Endothelial cell of umbilical vein (primary cell): ENCODE measurements at regions of chr17 and their contacts with region 1.

Region 1: DNA sequence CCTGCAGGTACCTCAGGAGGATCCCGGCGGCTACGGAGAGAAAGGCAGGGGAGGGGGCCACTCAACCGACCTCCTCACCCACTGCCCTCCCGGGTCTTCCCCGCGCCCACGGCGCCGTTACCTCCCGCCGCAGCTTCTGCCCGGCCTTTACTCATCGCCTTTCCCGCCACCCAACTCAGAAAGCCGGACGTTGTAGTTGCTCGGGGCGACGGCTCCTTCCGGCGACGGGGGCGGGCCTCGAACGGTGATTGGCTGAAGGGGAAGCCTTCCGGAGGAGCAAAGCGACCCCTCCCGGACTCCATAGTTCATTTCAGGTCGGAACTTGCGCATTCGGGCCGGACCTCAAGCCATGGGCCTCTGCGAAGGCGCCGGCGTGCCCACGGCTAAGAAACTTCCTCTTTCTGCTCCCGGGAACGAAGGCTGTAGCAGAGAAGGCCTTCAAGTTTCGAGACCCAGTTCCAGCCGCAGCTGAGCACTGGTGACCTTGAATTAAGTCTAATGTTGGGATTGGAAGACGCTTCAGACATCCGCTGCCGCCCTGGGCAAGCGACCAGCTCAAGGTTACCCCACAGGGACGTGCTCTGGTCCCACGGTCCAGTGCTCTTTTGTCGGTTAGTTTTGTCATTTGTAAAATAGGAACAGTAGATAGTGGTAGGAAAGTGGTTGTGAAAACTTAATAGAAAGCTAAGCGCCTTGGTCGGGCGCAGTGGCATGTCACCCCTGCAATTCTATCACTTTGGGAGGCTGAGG is at the start of gene PSMC3IP:
- DNase-seq: peak; percentile 96
- H3K4me3 ChIP-seq: peak within 1 kb of the TSS; percentile 53 to 80 (median 76)
- H3K27ac ChIP-seq: peak within 1 kb of the TSS; percentile 50
- H3K4me1 ChIP-seq: peaks cover 18% of the 10 kb centered on the region
- H3K27me3 ChIP-seq: no peaks in the 10 kb centered on the region
- CTCF ChIP-seq: peak; percentile 55 to 64
- POLR2A ChIP-seq: peak; percentile 69
- total RNA-seq, gene PSMC3IP: 19.3 and 20.8 TPM in 2 replicates

Region 2: GRCh38 chr17:42183741-42184711 is 393.7 kb before region 1 on chr17:
- CTCF ChIA-PET with region 1: no interaction called
- POLR2A ChIA-PET with region 1: interaction called, 10 read pairs
- dilution Hi-C with region 1: no loop called
- intact Hi-C with region 1: no loop called
- DNase-seq: peak; percentile 70
- H3K4me3 ChIP-seq: peak overlapping the region; percentile 35 to 51 (median 45)
- H3K27ac ChIP-seq: peak overlapping the region; percentile 16
- H3K4me1 ChIP-seq: peaks cover 14% of the 10 kb centered on the region
- H3K27me3 ChIP-seq: peaks cover 9 to 13% of the 10 kb centered on the region in 2 experiments
- CTCF ChIP-seq: peak; percentile 86 to 99
- POLR2A ChIP-seq: peak; percentile 38

Region 3: DNA sequence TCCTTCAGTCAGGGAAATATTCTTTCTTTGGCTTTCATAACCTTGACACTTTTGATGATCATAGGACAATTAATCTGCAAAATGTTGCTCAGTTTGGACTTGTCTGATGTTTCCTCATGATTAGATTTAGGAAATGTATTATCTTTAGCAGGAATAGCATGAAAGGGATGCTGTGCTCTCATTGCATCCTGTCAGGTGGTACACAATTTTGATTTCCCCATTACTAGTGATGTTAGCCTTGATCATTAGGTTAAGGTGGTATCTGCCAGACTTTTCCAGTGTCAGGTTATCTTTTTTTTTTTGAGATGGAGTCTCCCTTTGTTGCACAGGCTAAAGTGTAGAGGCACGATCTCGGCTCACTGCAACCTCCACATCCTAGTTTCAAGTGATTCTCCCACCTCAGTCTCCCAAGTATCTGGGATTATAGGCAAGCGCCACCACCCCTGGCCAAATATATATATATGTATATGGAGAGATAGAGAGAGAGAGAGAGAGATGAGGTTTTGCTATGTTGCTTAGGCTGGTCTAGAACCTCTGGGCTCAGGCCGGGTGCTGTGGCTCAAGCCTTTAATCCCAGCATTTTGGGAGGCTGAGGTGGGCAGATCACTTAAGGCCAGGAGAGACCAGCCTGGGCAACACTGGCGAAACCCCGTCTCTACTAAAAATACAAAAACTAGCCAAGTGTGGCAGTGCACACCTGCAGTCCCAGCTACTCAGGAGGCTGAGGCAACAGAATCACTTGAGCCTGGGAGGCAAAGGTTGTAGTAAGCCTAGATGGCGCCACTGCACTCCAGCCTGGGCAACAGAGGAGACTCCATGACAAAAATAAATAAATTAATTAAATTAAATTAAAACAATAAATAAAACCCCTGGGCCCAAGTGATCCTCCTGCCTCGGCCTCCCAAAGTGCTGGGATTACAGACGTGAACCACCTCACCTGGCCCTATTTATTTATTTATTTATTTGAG is 138.8 kb before region 1 on chr17:
- CTCF ChIA-PET with region 1: no interaction called
- POLR2A ChIA-PET with region 1: no interaction called
- dilution Hi-C with region 1: no loop called
- intact Hi-C with region 1: no loop called
- DNase-seq: peak; percentile 40
- H3K4me3 ChIP-seq: no peak overlapping the region
- H3K27ac ChIP-seq: no peak overlapping the region
- H3K4me1 ChIP-seq: peaks cover 8% of the 10 kb centered on the region
- H3K27me3 ChIP-seq: no peaks in the 10 kb centered on the region
- CTCF ChIP-seq: peak; percentile 26 to 58
- POLR2A ChIP-seq: no peak

Region 4: DNA sequence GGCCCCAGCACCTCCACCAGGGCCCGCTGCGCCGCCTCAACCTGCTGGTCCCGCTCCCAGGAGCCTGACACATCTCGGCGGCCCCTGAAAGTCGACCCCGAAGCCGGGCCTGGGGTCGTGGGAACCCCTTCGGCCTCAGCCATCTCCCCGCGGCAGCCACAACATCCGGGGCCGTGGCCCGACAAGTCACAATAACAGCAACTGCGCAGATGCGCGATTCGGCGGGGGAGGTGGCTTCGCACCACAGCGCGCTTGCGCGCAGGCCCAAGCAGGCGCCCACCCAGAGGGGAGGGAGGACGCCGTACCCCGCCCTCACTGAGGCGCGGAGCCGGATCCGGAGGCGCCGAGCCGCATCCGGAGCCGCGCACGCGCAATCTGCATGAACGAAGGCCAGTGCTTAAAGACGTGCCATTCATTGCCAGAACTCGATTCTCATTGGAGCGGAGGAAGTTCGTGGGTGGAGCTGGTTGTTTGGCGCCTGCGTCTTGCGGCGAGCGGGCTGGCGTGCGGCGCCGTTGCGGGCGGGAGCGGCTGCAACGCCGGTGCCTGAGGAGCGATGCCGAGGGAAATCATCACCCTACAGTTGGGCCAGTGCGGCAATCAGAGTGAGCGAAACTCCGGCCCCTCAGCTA is 31.6 kb after region 1 on chr17 and contains the starts of genes RETREG3 and TUBG1:
- CTCF ChIA-PET with region 1: interaction called, 39 read pairs
- POLR2A ChIA-PET with region 1: no interaction called
- dilution Hi-C with region 1: no loop called
- intact Hi-C with region 1: loop called (anchors 2 kb)
- DNase-seq: peak; percentile 99
- H3K4me3 ChIP-seq: peak within 1 kb of the TSS; percentile 73 to 81 (median 79)
- H3K27ac ChIP-seq: peak within 1 kb of the TSS; percentile 69
- H3K4me1 ChIP-seq: peaks cover 11% of the 10 kb centered on the region
- H3K27me3 ChIP-seq: no peaks in the 10 kb centered on the region
- CTCF ChIP-seq: peak; percentile 39 to 72
- POLR2A ChIP-seq: peak; percentile 89
- total RNA-seq, gene RETREG3: 52.3 and 53.4 TPM in 2 replicates
- total RNA-seq, gene TUBG1: 96.9 and 102 TPM in 2 replicates

Region 5: GRCh38 chr17:42698736-42699414 is 121.2 kb after region 1 on chr17:
- CTCF ChIA-PET with region 1: interaction called, 19 read pairs
- POLR2A ChIA-PET with region 1: no interaction called
- dilution Hi-C with region 1: no loop called
- intact Hi-C with region 1: no loop called
- DNase-seq: no peak
- H3K4me3 ChIP-seq: no peak overlapping the region
- H3K27ac ChIP-seq: no peak overlapping the region
- H3K4me1 ChIP-seq: no peaks in the 10 kb centered on the region
- H3K27me3 ChIP-seq: no peaks in the 10 kb centered on the region
- CTCF ChIP-seq: no peak
- POLR2A ChIP-seq: no peak

Region 6: DNA sequence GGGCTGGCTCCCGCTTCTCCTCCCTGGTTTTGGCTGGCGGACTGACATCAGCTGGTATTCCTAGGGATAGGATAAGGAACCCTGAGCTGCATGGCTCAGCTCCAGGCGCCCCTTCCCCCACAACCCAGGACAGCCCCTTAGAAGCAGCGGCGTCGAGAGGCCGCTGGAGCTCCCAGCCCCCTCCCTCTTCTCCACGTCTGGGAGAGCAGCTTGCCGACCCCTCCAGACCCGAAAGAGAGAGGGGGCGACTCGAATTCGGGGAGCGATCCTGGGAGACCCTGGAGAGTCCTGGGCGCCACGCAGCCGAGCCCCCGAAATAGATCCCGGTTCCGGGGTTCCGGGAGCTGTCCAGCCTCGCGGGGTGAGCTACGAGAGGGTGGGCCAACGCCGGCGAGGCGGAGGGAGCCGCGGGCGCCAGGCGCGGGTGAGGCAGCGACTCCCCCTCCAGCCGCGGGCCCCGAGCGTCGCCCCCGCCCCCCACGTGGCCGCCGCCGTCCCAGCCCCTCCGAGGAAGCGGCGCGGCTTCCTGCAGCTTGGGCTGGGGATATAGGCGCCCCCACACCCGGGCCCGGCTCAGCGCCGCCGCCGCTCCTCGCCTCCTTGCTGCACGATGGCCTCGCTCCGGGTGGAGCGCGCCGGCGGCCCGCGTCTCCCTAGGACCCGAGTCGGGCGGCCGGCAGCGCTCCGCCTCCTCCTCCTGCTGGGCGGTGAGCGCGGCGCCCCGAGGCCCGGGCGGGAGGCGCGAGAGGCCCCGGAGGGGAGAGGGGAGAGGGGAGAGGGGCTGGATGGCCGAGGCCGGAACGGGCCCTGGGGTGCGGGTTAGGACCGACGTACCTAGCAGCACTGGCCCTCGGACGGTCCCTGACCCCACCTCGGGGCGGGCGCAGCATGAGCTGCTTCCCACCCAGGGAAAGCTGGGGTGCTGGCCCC is 183.2 kb after region 1 on chr17 and contains the start of gene RAMP2:
- CTCF ChIA-PET with region 1: interaction called, 32 read pairs
- POLR2A ChIA-PET with region 1: no interaction called
- dilution Hi-C with region 1: no loop called
- intact Hi-C with region 1: no loop called
- DNase-seq: peak; percentile 28
- H3K4me3 ChIP-seq: peak within 1 kb of the TSS; percentile 10 to 67 (median 14)
- H3K27ac ChIP-seq: no peak within 1 kb of the TSS
- H3K4me1 ChIP-seq: peaks cover 39% of the 10 kb centered on the region
- H3K27me3 ChIP-seq: peaks cover 0 to 3% of the 10 kb centered on the region in 2 experiments
- CTCF ChIP-seq: no peak
- POLR2A ChIP-seq: no peak
- total RNA-seq, gene RAMP2: 71.0 and 106 TPM in 2 replicates

Region 7: DNA sequence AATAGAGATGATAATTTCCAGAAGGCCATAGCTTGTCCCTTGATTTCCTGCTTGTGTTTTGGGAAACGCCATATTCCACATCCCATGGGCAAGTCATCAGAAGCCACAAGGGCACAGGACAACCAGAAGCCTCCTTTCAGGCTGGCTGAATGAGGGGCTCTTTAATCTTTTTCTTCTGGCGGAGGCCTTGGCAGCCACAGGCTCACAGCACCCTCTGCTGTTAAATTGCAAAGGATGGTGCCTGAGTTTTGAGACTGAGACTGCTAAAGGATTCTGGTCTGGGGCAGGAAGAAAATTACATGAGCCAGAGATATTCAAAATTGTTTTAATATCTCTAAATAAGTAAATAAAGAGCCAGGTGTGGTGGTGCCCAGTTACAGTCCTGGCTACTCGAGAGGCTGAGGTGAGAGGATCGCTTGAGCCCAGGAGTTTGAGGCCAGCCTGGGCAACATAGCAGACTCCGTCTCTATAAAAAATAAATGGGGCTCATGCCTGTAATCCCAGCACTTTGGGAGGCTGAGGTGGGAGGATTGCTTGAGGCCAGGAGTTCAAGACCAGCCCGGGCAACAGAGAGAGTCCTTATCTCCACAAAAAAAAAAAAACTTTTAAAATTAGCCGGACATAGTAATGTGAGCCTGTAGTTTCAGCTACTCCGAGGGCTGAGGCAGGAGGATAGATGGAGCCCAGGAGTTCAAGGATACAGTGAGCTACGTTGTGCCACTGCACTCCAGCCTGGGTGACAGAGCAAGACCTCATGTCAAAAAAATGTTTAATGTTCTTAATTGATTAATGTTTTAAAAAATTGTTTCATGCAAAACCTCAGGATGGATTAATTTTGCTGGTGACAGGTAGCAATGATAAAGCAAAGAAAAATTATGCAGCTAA is 360.2 kb after region 1 on chr17:
- CTCF ChIA-PET with region 1: interaction called, 3 read pairs
- POLR2A ChIA-PET with region 1: no interaction called
- dilution Hi-C with region 1: no loop called
- intact Hi-C with region 1: loop called (anchors 5 kb)
- DNase-seq: peak; percentile 65
- H3K4me3 ChIP-seq: no peak overlapping the region
- H3K27ac ChIP-seq: no peak overlapping the region
- H3K4me1 ChIP-seq: no peaks in the 10 kb centered on the region
- H3K27me3 ChIP-seq: peaks cover 0 to 2% of the 10 kb centered on the region in 2 experiments
- CTCF ChIP-seq: peak; percentile 62 to 69
- POLR2A ChIP-seq: no peak

Region 8: GRCh38 chr17:43024407-43025289 is 446.9 kb after region 1 on chr17 and contains the start of gene RND2:
- CTCF ChIA-PET with region 1: no interaction called
- POLR2A ChIA-PET with region 1: no interaction called
- dilution Hi-C with region 1: no loop called
- intact Hi-C with region 1: no loop called
- DNase-seq: peak; percentile 93
- H3K4me3 ChIP-seq: peak within 1 kb of the TSS; percentile 32 to 59 (median 53)
- H3K27ac ChIP-seq: peak within 1 kb of the TSS; percentile 13
- H3K4me1 ChIP-seq: peaks cover 12% of the 10 kb centered on the region
- H3K27me3 ChIP-seq: no peaks in the 10 kb centered on the region
- CTCF ChIP-seq: peak; percentile 57 to 82
- POLR2A ChIP-seq: no peak
- total RNA-seq, gene RND2: 0.53 and 0.97 TPM in 2 replicates